ENCODE measurements at regions of chr17 and their contacts with region 1.

Region 1: GRCh38 chr17:30970831-30971567 is at the start of gene RNF135:
- DNase-seq: peak; percentile 77 to 85
- H3K4me3 ChIP-seq: peak within 1 kb of the TSS; percentile 88
- H3K27ac ChIP-seq: peak within 1 kb of the TSS; percentile 78
- H3K4me1 ChIP-seq: peaks cover 15% of the 10 kb centered on the region; the same call in 1 of the 2 replicates
- H3K27me3 ChIP-seq: no peaks in the 10 kb centered on the region
- CTCF ChIP-seq: peak; percentile 31; the same call in 1 of the 2 replicates
- total RNA-seq, gene RNF135: 22.9 and 23.4 TPM in 2 replicates

Region 2: DNA sequence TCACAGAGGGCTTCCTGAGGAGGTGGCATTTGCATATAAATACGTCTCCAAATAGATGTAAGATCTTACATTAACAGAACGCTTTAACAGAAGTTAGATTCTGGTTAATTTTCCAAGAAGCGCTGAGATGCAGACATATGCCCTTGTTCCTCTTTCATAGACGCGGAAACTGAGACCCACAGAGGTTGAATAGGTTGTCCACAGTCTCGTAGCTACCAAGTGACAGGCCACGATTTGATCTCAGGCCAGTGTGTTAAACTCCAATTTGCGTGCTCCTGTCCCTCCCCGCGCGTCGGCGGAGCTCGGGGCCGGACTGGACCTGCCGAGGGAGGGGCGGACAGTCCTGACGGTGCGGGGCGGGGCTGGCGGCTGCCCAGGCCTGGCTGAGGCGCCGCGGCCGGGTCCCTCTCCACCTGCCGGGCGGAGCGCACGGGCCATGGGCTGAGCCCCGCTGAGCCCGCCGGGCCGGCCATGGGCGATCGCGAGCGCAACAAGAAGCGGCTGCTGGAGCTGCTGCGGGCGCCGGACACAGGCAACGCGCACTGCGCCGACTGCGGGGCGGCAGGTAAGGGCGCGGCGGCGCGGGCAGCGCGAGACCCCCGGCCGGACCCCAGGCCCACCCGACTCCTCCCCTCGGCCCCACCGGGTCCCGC is 49.3 kb before region 1 on chr17 and contains the start of gene ADAP2:
- CTCF ChIA-PET with region 1: no interaction called
- POLR2A ChIA-PET with region 1: no interaction called
- intact Hi-C with region 1: loop called (anchors 5 kb)
- DNase-seq: peak in 1 of 2 experiments; percentile 54
- H3K4me3 ChIP-seq: peak within 1 kb of the TSS; percentile 42; the same call in 1 of the 2 replicates
- H3K27ac ChIP-seq: no peak within 1 kb of the TSS
- H3K4me1 ChIP-seq: no peaks in the 10 kb centered on the region
- H3K27me3 ChIP-seq: peaks cover 37% of the 10 kb centered on the region
- CTCF ChIP-seq: no peak
- total RNA-seq, gene ADAP2: 0.76 and 1.4 TPM in 2 replicates